ENCODE measurements at regions of chr9 and their contacts with region 1.

Region 1: DNA sequence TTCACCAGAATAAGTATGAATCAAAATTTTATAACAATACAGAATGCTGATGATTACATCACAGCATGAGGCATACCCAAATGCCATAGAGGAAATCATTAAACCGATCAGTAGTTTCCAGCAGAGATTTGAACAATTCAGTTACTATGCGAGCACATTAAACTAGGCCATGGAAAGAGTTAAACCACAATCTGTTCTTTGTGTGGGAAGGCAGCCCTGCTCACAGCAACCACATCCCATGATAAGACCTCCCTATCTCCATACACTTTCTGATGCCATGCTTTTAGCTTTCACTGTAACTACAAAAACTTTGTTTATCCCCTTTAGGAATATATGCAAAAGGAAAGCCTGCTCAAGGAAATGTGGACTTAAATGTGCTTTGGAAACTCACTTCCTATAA is 4.5 kb downstream of the NFIB start:
- DNase-seq: no peak
- H3K4me3 Mint-ChIP-seq: peak overlapping the region; percentile 80
- H3K27ac Mint-ChIP-seq: peak overlapping the region; percentile 88
- H3K4me1 Mint-ChIP-seq: peaks cover 38% of the 10 kb centered on the region
- H3K27me3 Mint-ChIP-seq: no peaks in the 10 kb centered on the region
- CTCF ChIP-seq: no peak

Region 2: GRCh38 chr9:13898957-13899356 is 410.4 kb before region 1 on chr9:
- CTCF ChIA-PET with region 1: no interaction called
- POLR2A ChIA-PET with region 1: interaction called, 10 read pairs
- intact Hi-C with region 1: no loop called
- DNase-seq: peak; percentile 15
- H3K4me3 Mint-ChIP-seq: no peak overlapping the region
- H3K27ac Mint-ChIP-seq: peak overlapping the region; percentile 98
- H3K4me1 Mint-ChIP-seq: peaks cover 50% of the 10 kb centered on the region
- H3K27me3 Mint-ChIP-seq: no peaks in the 10 kb centered on the region
- CTCF ChIP-seq: no peak

Region 3: GRCh38 chr9:13991395-13991794 is 318.0 kb before region 1 on chr9:
- CTCF ChIA-PET with region 1: no interaction called
- POLR2A ChIA-PET with region 1: no interaction called
- intact Hi-C with region 1: no loop called
- DNase-seq: no peak
- H3K4me3 Mint-ChIP-seq: no peak overlapping the region
- H3K27ac Mint-ChIP-seq: no peak overlapping the region
- H3K4me1 Mint-ChIP-seq: no peaks in the 10 kb centered on the region
- H3K27me3 Mint-ChIP-seq: no peaks in the 10 kb centered on the region
- CTCF ChIP-seq: no peak

Region 4: DNA sequence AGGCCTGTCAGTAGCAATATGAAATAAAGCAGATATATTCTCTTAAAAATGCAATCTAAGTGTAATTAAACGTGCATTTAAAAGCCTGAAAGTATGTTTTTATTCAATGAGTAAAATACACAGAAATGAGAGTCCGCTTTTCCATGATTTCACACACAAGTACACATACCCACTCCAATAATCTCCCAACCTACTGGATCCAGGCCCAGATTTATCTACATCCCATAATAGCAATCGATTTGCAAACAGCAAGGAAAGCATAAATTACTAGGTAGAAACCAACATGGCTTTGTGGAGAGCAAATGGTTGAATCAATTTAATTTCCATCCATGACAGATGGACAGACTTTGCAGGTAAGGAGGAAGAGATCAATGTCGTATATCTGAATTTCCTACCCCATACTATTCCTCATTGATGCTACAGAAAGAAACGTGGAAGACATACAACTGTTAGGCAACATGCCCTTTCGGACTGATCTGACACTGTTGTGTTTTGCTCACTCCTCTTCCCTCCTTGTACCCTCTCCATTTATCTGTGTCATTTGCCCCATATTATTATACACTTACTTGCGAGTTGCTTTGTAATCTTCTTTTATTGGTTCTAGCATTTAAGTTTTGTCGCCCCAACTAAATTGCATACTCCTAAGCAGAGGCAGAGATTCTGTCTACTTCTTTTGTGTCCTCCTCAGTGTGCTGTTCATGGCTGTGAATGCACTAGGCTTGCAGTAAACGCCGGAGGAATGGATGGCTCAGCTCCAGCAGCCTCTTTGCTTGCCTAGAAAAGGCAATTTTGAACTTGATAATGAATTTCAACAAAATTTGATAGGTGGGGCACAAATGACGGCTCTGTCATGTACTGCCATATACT is 129.1 kb before region 1 on chr9:
- CTCF ChIA-PET with region 1: no interaction called
- POLR2A ChIA-PET with region 1: interaction called, 13 read pairs
- intact Hi-C with region 1: loop called (anchors 2 kb)
- DNase-seq: no peak
- H3K4me3 Mint-ChIP-seq: peak overlapping the region; percentile 77
- H3K27ac Mint-ChIP-seq: peak overlapping the region; percentile 63
- H3K4me1 Mint-ChIP-seq: peaks cover 34% of the 10 kb centered on the region
- H3K27me3 Mint-ChIP-seq: no peaks in the 10 kb centered on the region
- CTCF ChIP-seq: no peak

Region 5: GRCh38 chr9:14238552-14238951 is 70.9 kb before region 1 on chr9:
- CTCF ChIA-PET with region 1: no interaction called
- POLR2A ChIA-PET with region 1: interaction called, 10 read pairs
- intact Hi-C with region 1: loop called (anchors 5 kb)
- DNase-seq: peak; percentile 86
- H3K4me3 Mint-ChIP-seq: peak overlapping the region; percentile 66
- H3K27ac Mint-ChIP-seq: peak overlapping the region; percentile 84
- H3K4me1 Mint-ChIP-seq: peaks cover 42% of the 10 kb centered on the region
- H3K27me3 Mint-ChIP-seq: no peaks in the 10 kb centered on the region
- CTCF ChIP-seq: no peak

Region 6: GRCh38 chr9:14277244-14277643 is 32.2 kb before region 1 on chr9:
- CTCF ChIA-PET with region 1: interaction called, 3 read pairs
- POLR2A ChIA-PET with region 1: interaction called, 18 read pairs
- intact Hi-C with region 1: no loop called
- DNase-seq: peak; percentile 83
- H3K4me3 Mint-ChIP-seq: peak overlapping the region; percentile 54
- H3K27ac Mint-ChIP-seq: peak overlapping the region; percentile 63
- H3K4me1 Mint-ChIP-seq: peaks cover 71% of the 10 kb centered on the region
- H3K27me3 Mint-ChIP-seq: no peaks in the 10 kb centered on the region
- CTCF ChIP-seq: no peak